Activated T-helper 1 cell treated with anti-CD3 and anti-CD28 coated beads, Interleukin-12 subunit alpha, Interleukin-12 subunit beta, Interleukin-2, Interleukin-4 antibody, amounts not matched to agents 30 ng/mL and 10 ng/mL and 1 ng/mL, durations not matched to agents 14 hours and 24 hours and 36 hours (primary cell): ENCODE measurements at regions of chr15 and their contacts with region 1.

Region 1: DNA sequence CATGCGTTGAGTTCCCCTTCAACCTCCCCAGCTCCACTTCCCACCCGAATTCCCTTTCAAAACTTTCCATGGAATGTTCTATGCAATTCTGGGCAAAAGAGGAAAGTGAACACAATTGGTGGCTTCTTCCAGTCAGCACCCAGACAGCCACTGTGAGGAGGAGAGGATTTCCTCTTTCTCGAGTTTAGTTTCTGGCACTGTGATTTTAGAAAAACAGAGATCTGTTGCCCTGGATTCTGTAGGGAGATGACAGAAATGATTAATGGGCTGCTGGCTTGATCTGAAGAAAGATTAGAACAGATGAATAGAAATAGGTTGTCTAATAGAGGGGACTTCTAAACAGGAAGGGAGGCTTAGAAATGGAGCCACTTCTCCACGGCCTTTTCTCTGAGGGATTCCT is 172.0 kb downstream of the MCTP2 start:
- DNase-seq: no peak
- H3K4me3 Mint-ChIP-seq: no peak overlapping the region
- H3K27ac Mint-ChIP-seq: peak overlapping the region; percentile 47
- H3K4me1 Mint-ChIP-seq: no peaks in the 10 kb centered on the region
- H3K27me3 Mint-ChIP-seq: no peaks in the 10 kb centered on the region

Region 2: GRCh38 chr15:93862791-93863190 is 540.5 kb before region 1 on chr15:
- intact Hi-C with region 1: no loop called
- DNase-seq: no peak
- H3K4me3 Mint-ChIP-seq: no peak overlapping the region
- H3K27ac Mint-ChIP-seq: no peak overlapping the region
- H3K4me1 Mint-ChIP-seq: no peaks in the 10 kb centered on the region
- H3K27me3 Mint-ChIP-seq: peaks cover 10% of the 10 kb centered on the region

Region 3: GRCh38 chr15:94387849-94388441 is 15.4 kb before region 1 on chr15:
- intact Hi-C with region 1: loop called (anchors 2 kb)
- DNase-seq: peak; percentile 23
- H3K4me3 Mint-ChIP-seq: peak overlapping the region; percentile 31
- H3K27ac Mint-ChIP-seq: peak overlapping the region; percentile 49
- H3K4me1 Mint-ChIP-seq: peaks cover 26% of the 10 kb centered on the region
- H3K27me3 Mint-ChIP-seq: no peaks in the 10 kb centered on the region